A673 (cell line): ENCODE measurements at regions of chr20 and their contacts with region 1.

Region 1: DNA sequence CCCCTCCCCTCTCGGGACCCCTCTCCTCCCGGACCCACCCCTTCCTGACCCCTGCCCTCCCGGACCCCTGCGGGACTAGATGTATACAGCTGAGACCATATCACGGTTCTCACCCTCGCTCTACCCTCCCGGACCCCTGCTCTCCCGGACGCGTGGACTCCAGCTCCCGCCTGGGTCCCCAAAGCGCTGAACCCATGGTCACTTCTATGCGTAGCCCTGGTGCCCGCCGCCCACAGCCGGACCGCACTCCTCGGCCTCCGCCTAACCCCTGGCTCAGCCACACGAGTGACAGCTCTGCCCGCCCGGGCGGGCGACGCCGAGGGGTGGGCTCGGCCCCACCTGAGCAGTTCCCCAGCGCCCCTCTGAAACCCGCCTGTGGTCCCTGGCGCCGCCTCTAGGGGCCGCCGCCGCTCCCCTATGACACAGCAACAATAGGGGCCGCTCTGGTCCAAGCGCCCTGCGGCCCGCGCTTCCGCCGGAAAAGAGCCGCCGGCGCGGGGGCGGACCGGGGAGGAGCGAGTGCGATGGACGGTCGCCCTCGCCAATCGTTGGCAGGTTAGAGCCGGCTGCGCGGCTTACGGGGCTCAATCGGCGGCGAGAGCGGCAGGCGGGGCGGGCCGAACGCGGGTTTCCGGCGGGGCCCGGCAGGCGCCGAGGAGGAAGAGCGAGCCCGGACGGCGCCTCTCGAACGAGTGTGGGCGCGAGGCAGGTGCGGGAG is at the start of gene ADRM1:
- DNase-seq: peak; percentile 98
- H3K4me3 ChIP-seq: peak within 1 kb of the TSS; percentile 97
- H3K27ac ChIP-seq: peak within 1 kb of the TSS; percentile 96
- H3K4me1 ChIP-seq: peaks cover 18% of the 10 kb centered on the region
- H3K27me3 ChIP-seq: no peaks in the 10 kb centered on the region
- CTCF ChIP-seq: peak; percentile 94
- total RNA-seq, gene ADRM1: 218 and 252 TPM in 2 replicates

Region 2: GRCh38 chr20:61886721-61887594 is 415.5 kb before region 1 on chr20:
- CTCF ChIA-PET with region 1: interaction called, 12 read pairs
- POLR2A ChIA-PET with region 1: no interaction called
- intact Hi-C with region 1: no loop called
- DNase-seq: peak; percentile 74
- H3K4me3 ChIP-seq: no peak overlapping the region
- H3K27ac ChIP-seq: no peak overlapping the region
- H3K4me1 ChIP-seq: no peaks in the 10 kb centered on the region
- H3K27me3 ChIP-seq: peaks cover 4% of the 10 kb centered on the region
- CTCF ChIP-seq: peak; percentile 95

Region 3: DNA sequence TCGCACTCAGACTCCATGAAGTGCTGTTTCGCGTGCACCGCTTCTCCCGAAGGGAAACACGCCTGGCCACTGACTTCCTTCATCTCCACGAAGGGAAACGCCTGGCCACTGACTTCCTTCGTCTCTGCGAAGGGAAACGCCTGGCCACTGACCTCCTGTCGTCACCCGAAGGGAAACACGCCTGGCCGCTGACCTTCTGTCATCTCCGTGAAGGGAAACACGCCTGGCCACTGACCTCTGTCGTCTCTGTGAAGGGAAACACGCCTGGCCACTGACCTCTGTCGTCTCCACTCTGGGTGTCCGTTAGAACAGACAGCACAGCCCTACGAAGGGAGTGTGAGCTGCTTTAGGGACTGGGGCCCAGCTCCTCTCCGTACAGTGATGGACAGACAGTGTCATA is 16.8 kb before region 1 on chr20:
- CTCF ChIA-PET with region 1: no interaction called
- POLR2A ChIA-PET with region 1: no interaction called
- intact Hi-C with region 1: no loop called
- DNase-seq: no peak
- H3K4me3 ChIP-seq: no peak overlapping the region
- H3K27ac ChIP-seq: no peak overlapping the region
- H3K4me1 ChIP-seq: no peaks in the 10 kb centered on the region
- H3K27me3 ChIP-seq: no peaks in the 10 kb centered on the region
- CTCF ChIP-seq: no peak

Region 4: DNA sequence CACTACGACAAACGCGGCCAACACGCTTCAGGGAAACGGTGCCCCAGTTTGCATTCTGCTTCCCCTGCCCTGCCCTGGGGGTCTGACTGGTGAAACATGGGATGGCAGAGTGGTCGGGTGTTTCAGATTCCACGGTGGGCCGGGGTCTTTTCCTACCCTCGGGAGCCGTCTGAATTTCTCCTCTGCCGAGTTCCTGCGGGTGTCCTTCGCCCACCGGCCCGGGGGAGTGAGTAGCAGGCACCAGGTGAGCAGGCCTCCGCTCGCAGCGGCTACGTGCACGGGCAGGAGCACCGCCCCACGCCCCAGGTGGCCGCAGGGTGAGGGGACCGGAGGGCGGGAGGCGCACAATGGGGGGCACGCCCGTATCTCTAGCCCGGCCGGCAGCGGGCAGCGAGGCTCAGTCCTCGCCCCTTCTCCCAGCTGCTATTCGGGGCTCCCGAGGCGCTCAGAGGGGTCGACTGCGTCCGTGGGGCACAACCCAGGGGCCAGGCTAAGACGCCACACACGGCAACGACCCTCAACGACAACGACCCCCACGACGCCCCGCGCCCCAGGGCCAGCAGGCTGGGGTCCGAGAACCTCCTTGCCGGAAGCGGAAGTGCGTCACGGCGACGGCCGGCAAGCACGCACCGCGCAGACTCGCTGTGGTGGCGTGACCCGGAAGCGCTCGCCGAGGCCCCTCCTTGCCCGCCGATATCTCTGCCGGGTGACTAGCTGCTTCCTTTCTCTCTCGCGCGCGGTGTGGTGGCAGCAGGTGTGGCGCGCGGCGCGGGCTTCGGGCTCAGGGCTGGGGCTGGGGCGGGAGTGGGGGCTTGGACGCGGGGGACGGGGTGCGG is 84.1 kb after region 1 on chr20 and contains the start of gene RPS21:
- CTCF ChIA-PET with region 1: interaction called, 19 read pairs
- POLR2A ChIA-PET with region 1: no interaction called
- intact Hi-C with region 1: loop called (anchors 1 kb)
- DNase-seq: peak; percentile 95
- H3K4me3 ChIP-seq: peak within 1 kb of the TSS; percentile 100
- H3K27ac ChIP-seq: peak within 1 kb of the TSS; percentile 96
- H3K4me1 ChIP-seq: peaks cover 24% of the 10 kb centered on the region
- H3K27me3 ChIP-seq: no peaks in the 10 kb centered on the region
- CTCF ChIP-seq: no peak
- total RNA-seq, gene RPS21: 1,502 and 1,506 TPM in 2 replicates

Region 5: DNA sequence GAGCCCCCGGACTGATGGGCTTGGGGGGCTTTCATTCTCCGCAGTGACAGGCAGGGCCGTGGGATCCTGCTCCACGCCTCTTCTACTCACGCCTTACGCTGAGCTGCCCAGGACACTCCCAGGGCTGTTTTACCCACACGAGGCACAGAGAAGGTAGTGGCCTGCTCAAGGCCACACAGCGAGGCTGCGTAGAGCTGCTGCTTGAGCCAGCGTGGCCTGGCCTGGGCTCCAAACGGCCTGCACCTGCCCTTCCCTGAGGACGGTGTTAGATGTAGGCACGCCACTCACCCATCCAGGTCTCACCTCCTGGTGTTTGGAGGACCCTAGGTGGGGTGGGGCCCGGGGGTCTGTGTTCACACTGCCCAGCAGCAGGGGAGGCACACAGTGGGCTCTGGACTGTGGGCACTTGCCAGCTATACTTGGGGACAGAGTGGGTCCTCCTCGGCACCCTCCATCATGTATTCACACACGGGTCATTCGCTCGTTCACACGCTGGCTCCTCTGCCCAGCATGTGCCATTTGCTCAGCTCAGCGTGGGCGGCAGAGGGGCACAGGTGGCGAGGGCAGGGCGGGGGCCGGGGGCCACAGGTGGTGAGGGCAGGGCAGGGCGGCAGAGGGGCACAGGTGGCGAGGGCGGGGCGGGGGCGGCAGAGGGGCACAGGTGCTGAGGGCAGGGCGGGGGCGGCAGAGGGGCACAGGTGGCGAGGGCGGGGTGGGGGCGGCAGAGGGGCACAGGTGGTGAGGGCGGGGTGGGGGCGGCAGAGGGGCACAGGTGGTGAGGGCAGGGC is 143.2 kb after region 1 on chr20:
- CTCF ChIA-PET with region 1: interaction called, 16 read pairs
- POLR2A ChIA-PET with region 1: no interaction called
- intact Hi-C with region 1: no loop called
- DNase-seq: no peak
- H3K4me3 ChIP-seq: no peak overlapping the region
- H3K27ac ChIP-seq: no peak overlapping the region
- H3K4me1 ChIP-seq: no peaks in the 10 kb centered on the region
- H3K27me3 ChIP-seq: peaks cover 70% of the 10 kb centered on the region
- CTCF ChIP-seq: no peak

Region 6: GRCh38 chr20:62571667-62572344 is 269.3 kb after region 1 on chr20:
- CTCF ChIA-PET with region 1: interaction called, 10 read pairs
- POLR2A ChIA-PET with region 1: no interaction called
- intact Hi-C with region 1: no loop called
- DNase-seq: peak; percentile 29
- H3K4me3 ChIP-seq: no peak overlapping the region
- H3K27ac ChIP-seq: no peak overlapping the region
- H3K4me1 ChIP-seq: no peaks in the 10 kb centered on the region
- H3K27me3 ChIP-seq: peaks cover 66% of the 10 kb centered on the region
- CTCF ChIP-seq: peak; percentile 34; the same call in 1 of the 2 replicates

Region 7: GRCh38 chr20:64192406-64192805 is 1889.9 kb after region 1 on chr20:
- CTCF ChIA-PET with region 1: no interaction called
- POLR2A ChIA-PET with region 1: no interaction called
- intact Hi-C with region 1: no loop called
- DNase-seq: no peak
- H3K4me3 ChIP-seq: no peak overlapping the region
- H3K27ac ChIP-seq: no peak overlapping the region
- H3K4me1 ChIP-seq: peaks cover 5% of the 10 kb centered on the region
- H3K27me3 ChIP-seq: peaks cover 51% of the 10 kb centered on the region
- CTCF ChIP-seq: no peak